HEK293 (cell line): ENCODE measurements at regions of chr10 and their contacts with region 1.

Region 1: GRCh38 chr10:72834183-72834825 is 59.2 kb upstream of the OIT3 start:
- H3K4me3 ChIP-seq: no peak overlapping the region
- H3K27ac ChIP-seq: no peak overlapping the region
- H3K4me1 ChIP-seq: 0 out of 2 replicates have a peak, but pooled peaks cover 6% of the 10 kb centered on the region
- CTCF ChIP-seq: no peak

Region 2: DNA sequence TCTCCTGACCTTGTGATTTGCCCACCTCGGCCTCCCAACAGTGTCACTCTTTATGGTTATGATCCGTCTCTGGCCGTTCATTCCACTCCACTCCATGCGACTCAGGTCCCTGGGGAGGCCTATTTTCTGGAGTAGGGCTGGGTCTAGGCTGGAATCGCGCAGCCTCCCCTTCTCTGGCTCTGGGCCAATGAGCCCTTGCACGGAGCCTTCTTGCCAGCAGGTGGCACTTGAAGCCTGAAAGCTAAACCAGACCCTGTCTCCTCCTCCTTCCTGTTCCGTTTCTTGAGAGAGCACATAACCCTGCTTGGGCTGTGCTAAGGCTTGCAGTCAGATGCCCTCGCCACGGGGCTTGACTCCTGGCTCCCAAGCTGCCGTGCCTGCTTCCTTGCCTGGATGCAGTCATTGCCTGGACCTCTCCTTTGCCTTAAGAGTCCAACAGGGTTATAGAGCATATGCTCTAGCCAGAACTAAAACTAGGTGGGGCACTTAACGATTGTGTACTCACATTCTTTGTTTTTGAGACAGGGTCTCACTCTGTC is 470.0 kb before region 1 on chr10:
- CTCF ChIA-PET with region 1: interaction called, 30 read pairs
- POLR2A ChIA-PET with region 1: no interaction called
- H3K4me3 ChIP-seq: no peak overlapping the region
- H3K27ac ChIP-seq: no peak overlapping the region
- H3K4me1 ChIP-seq: no peaks in the 10 kb centered on the region
- CTCF ChIP-seq: peak; percentile 98

Region 3: GRCh38 chr10:72692057-72692910 is 142.0 kb before region 1 on chr10 and contains the start of gene MCU:
- CTCF ChIA-PET with region 1: interaction called, 18 read pairs
- POLR2A ChIA-PET with region 1: interaction called, 5 read pairs
- H3K4me3 ChIP-seq: peak within 1 kb of the TSS; percentile 82
- H3K27ac ChIP-seq: peak within 1 kb of the TSS; percentile 83
- H3K4me1 ChIP-seq: peaks cover 20% of the 10 kb centered on the region; the same call in 1 of the 2 replicates
- CTCF ChIP-seq: no peak

Region 4: DNA sequence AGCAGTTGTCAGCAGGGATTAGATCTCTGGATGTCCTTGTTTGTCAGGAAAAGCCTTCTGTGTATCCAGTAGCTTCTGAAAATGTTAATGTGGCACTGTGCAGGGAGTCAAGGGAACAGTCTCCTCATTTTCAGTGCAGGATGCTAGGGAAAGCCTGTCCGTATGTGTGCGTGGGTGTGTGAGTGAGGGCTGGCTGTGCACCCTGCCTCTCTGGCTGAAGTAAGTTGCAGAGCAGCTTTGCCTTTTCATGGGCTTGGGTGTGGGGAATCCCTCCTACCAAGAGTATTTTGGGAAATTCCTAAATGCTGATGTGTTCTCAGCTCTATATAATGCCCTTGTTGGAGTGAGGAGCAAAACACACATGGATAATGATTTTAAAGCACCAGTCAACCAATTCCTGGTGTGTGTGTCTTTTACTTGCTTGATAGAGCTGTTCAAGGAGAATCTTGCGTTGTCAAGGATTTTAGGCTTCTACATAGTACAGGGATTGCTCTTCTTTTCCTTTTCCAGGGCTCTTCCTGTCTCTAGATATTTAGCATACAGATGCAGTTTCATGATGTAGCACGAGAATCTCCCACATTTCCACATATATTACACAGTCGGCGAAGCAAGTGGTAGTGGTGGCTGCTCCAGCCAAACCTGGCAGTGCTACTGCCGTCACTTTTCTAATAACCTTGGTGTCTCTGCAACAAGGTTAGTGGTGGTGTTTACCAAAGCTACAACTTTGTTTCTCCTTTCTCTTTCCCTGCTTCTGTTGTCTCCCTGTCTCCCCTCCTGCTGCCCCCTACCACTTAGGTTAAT is 49.6 kb before region 1 on chr10:
- CTCF ChIA-PET with region 1: no interaction called
- POLR2A ChIA-PET with region 1: no interaction called
- H3K4me3 ChIP-seq: no peak overlapping the region
- H3K27ac ChIP-seq: no peak overlapping the region
- H3K4me1 ChIP-seq: peaks cover 15% of the 10 kb centered on the region
- CTCF ChIP-seq: no peak

Region 5: GRCh38 chr10:72846225-72846624 is 11.9 kb after region 1 on chr10:
- CTCF ChIA-PET with region 1: no interaction called
- POLR2A ChIA-PET with region 1: no interaction called
- H3K4me3 ChIP-seq: no peak overlapping the region
- H3K27ac ChIP-seq: no peak overlapping the region
- H3K4me1 ChIP-seq: no peaks in the 10 kb centered on the region
- CTCF ChIP-seq: no peak

Region 6: DNA sequence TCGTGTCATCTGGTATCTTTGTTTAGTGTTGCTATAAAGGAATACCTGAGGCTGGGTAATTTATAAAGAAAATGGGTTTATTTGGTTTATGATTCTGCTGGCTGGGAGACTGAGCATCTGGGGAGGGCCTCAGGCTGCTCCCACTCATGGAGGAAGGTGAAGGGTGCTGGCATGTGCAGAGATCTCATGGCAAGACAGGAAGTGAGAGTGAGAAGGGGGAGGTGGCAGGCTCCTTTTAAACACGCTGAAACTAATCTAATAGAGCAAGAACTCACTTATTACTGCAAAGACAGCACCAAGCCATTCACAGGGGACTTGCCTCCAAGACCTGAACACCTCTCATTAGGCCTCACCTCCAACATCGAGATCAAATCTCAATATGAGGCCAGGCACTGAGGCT is 70.5 kb after region 1 on chr10:
- CTCF ChIA-PET with region 1: no interaction called
- POLR2A ChIA-PET with region 1: no interaction called
- H3K4me3 ChIP-seq: no peak overlapping the region
- H3K27ac ChIP-seq: no peak overlapping the region
- H3K4me1 ChIP-seq: no peaks in the 10 kb centered on the region
- CTCF ChIP-seq: no peak